GM18951 (cell line): ENCODE measurements at regions of chr10 and their contacts with region 1.

Region 1: DNA sequence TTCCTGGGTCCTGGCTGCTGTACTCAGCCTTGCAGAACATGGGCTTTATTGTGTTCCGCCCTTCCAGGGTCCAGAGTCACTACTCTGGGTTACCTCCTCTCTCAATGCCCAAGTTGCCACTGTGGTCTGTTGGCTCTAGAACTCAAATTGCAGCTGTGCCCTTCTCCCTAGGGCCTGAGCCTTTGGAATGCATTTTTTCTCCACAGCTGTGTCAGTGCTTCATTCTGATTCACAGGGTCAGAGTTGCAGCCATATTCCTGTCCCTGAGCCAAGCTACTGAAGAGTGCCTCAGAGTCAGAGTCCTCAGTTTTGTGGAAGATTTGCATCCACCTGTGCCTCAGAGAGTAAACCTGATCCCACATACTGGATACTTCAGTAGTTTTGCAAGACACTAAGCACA is 167.5 kb downstream of the ITGB1 start:
- POLR2A ChIP-seq: no peak

Region 2: DNA sequence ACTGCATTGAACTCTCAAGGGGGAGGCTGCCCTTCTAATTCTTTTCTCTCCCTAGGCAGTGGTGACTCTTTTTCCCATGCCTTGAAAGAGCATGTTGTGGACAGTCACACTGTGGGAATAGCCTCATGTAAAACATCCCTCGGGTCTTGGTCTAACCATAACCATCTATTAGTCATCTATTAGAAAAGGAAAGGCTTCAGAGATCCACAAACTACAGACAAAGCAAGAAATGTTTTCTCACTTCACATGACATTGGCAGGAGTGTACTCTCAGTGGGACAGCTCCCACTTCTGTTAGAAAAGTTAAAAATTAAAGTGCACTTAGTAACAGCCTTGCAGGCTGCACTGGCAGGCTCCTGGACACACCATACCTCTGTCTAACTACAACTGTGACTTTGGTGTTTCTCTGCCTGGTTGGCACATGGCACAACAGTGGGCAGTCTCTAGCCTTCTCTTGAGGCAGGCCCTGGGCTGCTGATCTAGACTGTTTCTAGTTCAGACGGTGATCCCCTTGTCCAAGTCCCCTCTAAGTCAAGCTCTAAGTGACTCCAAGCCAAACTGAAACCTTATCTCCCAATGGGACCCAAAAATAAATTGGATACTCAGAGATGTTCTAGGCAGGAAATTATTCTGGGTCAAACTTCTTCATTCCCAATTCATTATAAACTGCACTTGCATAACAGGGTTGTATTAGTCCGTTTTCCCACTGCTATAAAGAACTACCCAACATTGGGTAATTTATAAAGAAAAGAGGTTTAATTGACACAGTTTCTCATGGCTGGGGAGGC is 225.5 kb after region 1 on chr10:
- in situ Hi-C with region 1: loop called (anchors 5 kb)
- POLR2A ChIP-seq: no peak